Common myeloid progenitor, CD34-positive (primary cell): ENCODE measurements at regions of chr10 and their contacts with region 1.

Region 1: GRCh38 chr10:117449636-117450035 is 74.4 kb upstream of the PDZD8 start:
- DNase-seq: no peak
- H3K4me3 ChIP-seq: no peak overlapping the region
- H3K27ac ChIP-seq: no peak overlapping the region
- H3K4me1 ChIP-seq: peaks cover 0 to 6% (median 3%) of the 10 kb centered on the region in 4 experiments
- H3K27me3 ChIP-seq: no peaks in the 10 kb centered on the region

Region 2: DNA sequence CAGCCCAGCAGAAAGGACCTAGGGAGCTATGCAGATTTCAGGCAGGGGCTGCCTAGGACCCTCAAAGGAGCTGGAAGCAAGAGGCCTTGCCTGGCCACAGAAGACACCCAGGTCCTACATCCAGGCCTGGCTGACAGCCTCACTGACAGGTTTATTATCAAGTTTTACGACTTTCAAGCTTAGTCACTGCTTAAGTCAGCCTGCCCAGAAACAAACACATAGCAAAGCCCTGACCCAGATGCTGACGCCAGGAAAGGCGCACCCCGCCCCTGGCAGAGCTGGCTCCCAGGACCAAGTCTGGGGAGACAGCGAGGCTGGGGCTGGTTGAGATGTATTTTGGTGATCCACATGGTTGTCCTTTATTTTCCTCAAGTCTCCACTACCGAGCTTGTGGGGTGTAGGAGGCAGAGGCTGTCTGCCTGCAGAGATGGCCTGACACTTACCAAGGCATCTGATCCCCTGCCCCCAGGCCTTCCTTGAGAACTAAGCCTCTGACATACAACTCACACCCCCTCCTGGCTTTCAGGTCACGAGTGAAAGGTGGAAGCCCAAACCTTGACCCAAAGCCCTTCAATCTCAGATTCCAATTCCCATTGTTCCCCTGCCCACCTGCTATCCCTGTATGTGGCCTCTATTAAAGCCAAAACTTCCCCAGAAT is 12.3 kb after region 1 on chr10:
- CTCF ChIA-PET with region 1: interaction called, 15 read pairs
- POLR2A ChIA-PET with region 1: no interaction called
- DNase-seq: peak in 2 of 3 donors; percentile 28 to 58
- H3K4me3 ChIP-seq: no peak overlapping the region
- H3K27ac ChIP-seq: no peak overlapping the region
- H3K4me1 ChIP-seq: peaks cover 0 to 21% (median 13%) of the 10 kb centered on the region in 4 experiments
- H3K27me3 ChIP-seq: peaks cover 0 to 19% (median 10%) of the 10 kb centered on the region in 5 experiments